Activated T-helper 2 cell treated with anti-CD3 and anti-CD28 coated beads, Interferon-gamma antibody, Interleukin-2, Interleukin-4, amounts not matched to agents 10 μg/mL and 5 μg/mL and 100 μg/mL, durations not matched to agents 14 hours and 24 hours and 36 hours (primary cell): ENCODE measurements at regions of chr6 and their contacts with region 1.

Region 1: GRCh38 chr6:118843685-118844390 is 50.1 kb upstream of the ASF1A start:
- DNase-seq: no peak
- H3K4me3 Mint-ChIP-seq: peak overlapping the region; percentile 22
- H3K27ac Mint-ChIP-seq: peak overlapping the region; percentile 59
- H3K4me1 Mint-ChIP-seq: peaks cover 25% of the 10 kb centered on the region
- H3K27me3 Mint-ChIP-seq: no peaks in the 10 kb centered on the region

Region 2: GRCh38 chr6:118799826-118800225 is 44.0 kb before region 1 on chr6:
- intact Hi-C with region 1: no loop called
- DNase-seq: no peak
- H3K4me3 Mint-ChIP-seq: no peak overlapping the region
- H3K27ac Mint-ChIP-seq: no peak overlapping the region
- H3K4me1 Mint-ChIP-seq: peaks cover 27% of the 10 kb centered on the region
- H3K27me3 Mint-ChIP-seq: no peaks in the 10 kb centered on the region

Region 3: GRCh38 chr6:118810420-118811027 is 33.3 kb before region 1 on chr6:
- intact Hi-C with region 1: loop called (anchors 2 kb)
- DNase-seq: peak; percentile 56
- H3K4me3 Mint-ChIP-seq: no peak overlapping the region
- H3K27ac Mint-ChIP-seq: peak overlapping the region; percentile 52
- H3K4me1 Mint-ChIP-seq: peaks cover 54% of the 10 kb centered on the region
- H3K27me3 Mint-ChIP-seq: no peaks in the 10 kb centered on the region

Region 4: DNA sequence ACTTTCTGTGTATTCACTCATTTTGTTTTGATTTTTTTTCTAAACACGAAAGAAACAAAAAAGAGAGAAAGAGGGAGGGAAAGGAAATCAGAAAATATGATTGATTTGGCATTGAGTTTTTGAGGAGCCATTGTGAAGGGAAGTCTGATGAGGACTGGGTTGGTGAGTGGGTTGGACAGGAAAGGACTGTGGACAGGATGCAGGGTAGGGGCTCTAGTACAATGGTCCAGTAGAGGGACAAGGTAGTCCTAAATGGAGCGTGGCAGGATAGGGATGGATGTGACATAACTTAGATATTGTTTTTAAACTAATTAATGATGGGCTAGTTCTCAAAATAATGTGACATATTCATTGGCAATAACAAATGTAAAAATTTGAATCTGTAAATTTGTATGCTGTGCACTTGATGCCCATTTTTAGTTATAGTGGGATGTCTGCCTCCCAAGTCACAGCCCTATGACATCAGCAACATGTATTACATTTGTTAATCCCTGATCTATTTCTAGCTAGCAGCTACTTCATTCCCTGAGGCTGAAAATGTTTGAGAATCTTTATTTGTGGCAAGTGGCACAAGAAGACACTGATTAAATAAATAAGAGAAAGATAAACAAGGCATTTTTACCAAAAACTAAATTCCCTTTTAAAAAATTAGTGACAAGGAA is 13.9 kb before region 1 on chr6:
- intact Hi-C with region 1: no loop called
- DNase-seq: no peak
- H3K4me3 Mint-ChIP-seq: no peak overlapping the region
- H3K27ac Mint-ChIP-seq: no peak overlapping the region
- H3K4me1 Mint-ChIP-seq: no peaks in the 10 kb centered on the region
- H3K27me3 Mint-ChIP-seq: no peaks in the 10 kb centered on the region

Region 5: DNA sequence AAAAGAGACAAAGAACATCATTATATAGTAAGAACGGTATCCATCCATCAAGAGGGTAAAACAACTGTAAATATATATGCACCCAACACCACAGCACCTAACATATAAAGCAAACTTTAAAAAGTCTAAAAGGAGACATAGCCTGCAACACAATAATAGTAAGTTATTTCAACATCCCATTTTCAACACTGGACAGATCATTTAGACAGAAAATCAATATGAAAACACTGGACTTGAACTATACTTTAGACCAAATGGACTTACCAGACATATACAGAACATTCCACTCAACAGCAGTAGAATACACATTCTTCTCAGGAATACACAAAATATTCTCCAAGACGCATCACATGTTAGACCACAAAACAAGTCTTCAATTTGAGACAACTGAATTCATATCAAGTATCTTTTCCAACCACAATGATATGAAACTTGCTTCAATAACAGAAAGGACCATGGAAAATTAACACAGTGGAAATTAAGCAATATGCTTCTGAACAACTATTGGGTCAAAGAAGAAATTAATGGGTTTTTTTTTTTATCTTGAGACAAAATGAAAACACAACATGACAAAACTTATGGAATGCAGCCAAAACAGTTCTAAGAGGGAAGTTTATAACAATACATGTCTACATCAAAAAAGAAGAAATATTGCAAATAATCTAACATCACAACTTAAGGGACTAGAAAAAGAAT is 26.2 kb after region 1 on chr6:
- intact Hi-C with region 1: loop called (anchors 1 kb)
- DNase-seq: no peak
- H3K4me3 Mint-ChIP-seq: no peak overlapping the region
- H3K27ac Mint-ChIP-seq: peak overlapping the region; percentile 5
- H3K4me1 Mint-ChIP-seq: peaks cover 31% of the 10 kb centered on the region
- H3K27me3 Mint-ChIP-seq: no peaks in the 10 kb centered on the region

Region 6: GRCh38 chr6:119052292-119052889 is 208.6 kb after region 1 on chr6:
- intact Hi-C with region 1: loop called (anchors 2 kb)
- DNase-seq: peak; percentile 20
- H3K4me3 Mint-ChIP-seq: no peak overlapping the region
- H3K27ac Mint-ChIP-seq: peak overlapping the region; percentile 36
- H3K4me1 Mint-ChIP-seq: peaks cover 23% of the 10 kb centered on the region
- H3K27me3 Mint-ChIP-seq: no peaks in the 10 kb centered on the region